Activated CD4-positive, alpha-beta memory T cell treated with anti-CD3 and anti-CD28 coated beads for 36 hours (primary cell): ENCODE measurements at regions of chr7 and their contacts with region 1.

Region 1: DNA sequence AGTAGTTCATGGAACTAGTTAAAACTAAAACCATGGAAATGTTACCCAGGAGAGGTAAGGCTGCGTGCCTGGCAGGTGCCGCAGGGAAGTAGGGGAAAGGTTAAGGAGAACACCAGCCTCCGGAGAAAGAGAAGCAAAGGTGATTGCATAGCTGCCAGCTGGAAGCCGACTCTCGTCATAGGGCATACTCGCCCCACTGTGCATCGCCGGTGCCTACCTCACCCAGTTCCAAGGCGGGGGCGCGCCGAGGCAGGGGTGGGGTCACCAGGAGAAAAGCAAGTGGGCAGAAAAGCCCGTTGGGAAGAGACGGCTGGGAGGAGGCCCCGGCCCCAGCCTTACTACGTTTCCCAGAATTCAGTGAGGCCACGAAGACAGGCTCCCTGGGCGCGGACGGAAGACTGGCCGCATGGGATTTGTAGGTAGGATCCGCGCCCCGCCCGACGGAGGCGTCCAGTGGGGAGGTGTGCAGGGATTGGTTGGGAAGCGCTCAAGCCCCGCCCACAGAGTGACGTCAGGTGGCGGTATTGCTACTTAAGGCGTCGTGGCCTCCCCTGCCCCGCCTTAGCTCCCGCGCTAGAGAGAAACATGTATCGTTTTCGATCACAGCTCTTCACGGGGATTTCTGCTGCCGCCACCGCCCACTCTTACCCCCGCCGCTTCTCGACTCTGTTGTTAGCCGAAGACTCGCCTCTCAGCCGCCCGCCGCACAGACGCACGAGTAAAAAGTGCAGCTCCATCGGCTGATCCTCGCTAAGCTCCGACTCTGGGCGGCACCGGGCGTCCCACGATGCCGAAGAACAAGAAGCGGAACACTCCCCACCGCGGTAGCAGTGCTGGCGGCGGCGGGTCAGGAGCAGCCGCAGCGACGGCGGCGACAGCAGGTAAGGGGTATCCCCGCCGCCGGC is at the start of gene IFRD1:
- DNase-seq: peak; percentile 98
- H3K4me3 Mint-ChIP-seq: peak within 1 kb of the TSS; percentile 96
- H3K27ac Mint-ChIP-seq: peak within 1 kb of the TSS; percentile 96
- H3K4me1 Mint-ChIP-seq: peaks cover 35% of the 10 kb centered on the region
- H3K27me3 Mint-ChIP-seq: no peaks in the 10 kb centered on the region
- total RNA-seq, gene IFRD1: 43.4 to 49.7 TPM

Region 2: GRCh38 chr7:111098011-111098925 is 1351.9 kb before region 1 on chr7:
- CTCF ChIA-PET with region 1: no interaction called
- POLR2A ChIA-PET with region 1: no interaction called
- intact Hi-C with region 1: loop called (anchors 10 kb)
- DNase-seq: peak; percentile 69
- H3K4me3 Mint-ChIP-seq: peak overlapping the region; percentile 15
- H3K27ac Mint-ChIP-seq: peak overlapping the region; percentile 51
- H3K4me1 Mint-ChIP-seq: peaks cover 36% of the 10 kb centered on the region
- H3K27me3 Mint-ChIP-seq: no peaks in the 10 kb centered on the region

Region 3: DNA sequence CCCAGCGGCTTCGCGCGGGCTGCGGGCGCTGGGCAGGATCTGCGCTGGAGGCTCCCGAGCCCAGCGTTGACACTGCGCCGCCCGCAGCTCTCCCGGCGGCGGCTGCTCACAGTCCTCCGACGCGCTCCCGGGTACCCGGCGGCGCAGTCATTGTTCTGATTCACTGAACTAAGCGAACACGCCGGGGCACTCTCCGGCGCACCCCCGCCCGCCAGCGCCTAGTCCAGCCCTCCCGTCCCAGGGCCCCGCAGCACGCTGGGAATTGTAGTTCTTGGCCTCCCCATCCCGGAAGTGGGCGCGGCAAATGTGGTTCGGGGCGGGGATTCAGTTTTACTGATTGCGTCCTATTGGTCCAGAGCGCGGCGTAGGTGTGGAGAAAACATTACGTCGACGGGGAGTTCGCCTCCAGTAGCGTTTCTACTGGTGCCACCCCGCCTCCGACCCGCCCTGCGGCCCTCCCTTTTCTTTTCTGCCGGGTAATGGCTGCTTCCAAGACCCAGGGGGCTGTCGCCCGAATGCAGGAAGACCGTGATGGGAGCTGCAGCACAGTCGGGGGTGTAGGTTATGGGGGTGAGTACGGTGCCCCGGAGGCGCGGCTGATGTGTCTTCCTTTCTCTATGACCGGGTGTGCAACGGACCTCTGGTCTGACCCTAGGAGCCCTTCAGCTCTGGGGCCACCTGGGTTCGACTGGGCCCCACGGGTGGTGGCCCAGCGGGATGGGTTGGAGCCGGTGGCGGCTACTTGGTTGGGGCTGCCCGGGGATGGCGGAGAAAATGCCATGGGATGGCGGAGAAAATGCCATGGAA is 243.7 kb before region 1 on chr7 and contains the starts of genes DOCK4 and ZNF277:
- CTCF ChIA-PET with region 1: interaction called, 8 read pairs
- POLR2A ChIA-PET with region 1: interaction called, 23 read pairs
- intact Hi-C with region 1: loop called (anchors 1 kb)
- DNase-seq: peak; percentile 99
- H3K4me3 Mint-ChIP-seq: peak within 1 kb of the TSS; percentile 86
- H3K27ac Mint-ChIP-seq: peak within 1 kb of the TSS; percentile 73
- H3K4me1 Mint-ChIP-seq: peaks cover 27% of the 10 kb centered on the region
- H3K27me3 Mint-ChIP-seq: peaks cover 30% of the 10 kb centered on the region
- total RNA-seq, gene DOCK4: 0.36 to 1.1 TPM
- total RNA-seq, gene ZNF277: 24.9 to 26.6 TPM

Region 4: GRCh38 chr7:112510001-112510742 is 60.0 kb after region 1 on chr7:
- CTCF ChIA-PET with region 1: no interaction called
- POLR2A ChIA-PET with region 1: no interaction called
- intact Hi-C with region 1: loop called (anchors 1 kb)
- DNase-seq: peak; percentile 31
- H3K4me3 Mint-ChIP-seq: no peak overlapping the region
- H3K27ac Mint-ChIP-seq: no peak overlapping the region
- H3K4me1 Mint-ChIP-seq: peaks cover 13% of the 10 kb centered on the region
- H3K27me3 Mint-ChIP-seq: no peaks in the 10 kb centered on the region

Region 5: GRCh38 chr7:112789817-112790585 is 339.8 kb after region 1 on chr7 and contains the start of gene TMEM168:
- CTCF ChIA-PET with region 1: no interaction called
- POLR2A ChIA-PET with region 1: no interaction called
- intact Hi-C with region 1: loop called (anchors 2 kb)
- DNase-seq: peak; percentile 90
- H3K4me3 Mint-ChIP-seq: peak within 1 kb of the TSS; percentile 98
- H3K27ac Mint-ChIP-seq: peak within 1 kb of the TSS; percentile 85
- H3K4me1 Mint-ChIP-seq: peaks cover 44% of the 10 kb centered on the region
- H3K27me3 Mint-ChIP-seq: no peaks in the 10 kb centered on the region
- total RNA-seq, gene TMEM168: 16.1 to 17.4 TPM

Region 6: DNA sequence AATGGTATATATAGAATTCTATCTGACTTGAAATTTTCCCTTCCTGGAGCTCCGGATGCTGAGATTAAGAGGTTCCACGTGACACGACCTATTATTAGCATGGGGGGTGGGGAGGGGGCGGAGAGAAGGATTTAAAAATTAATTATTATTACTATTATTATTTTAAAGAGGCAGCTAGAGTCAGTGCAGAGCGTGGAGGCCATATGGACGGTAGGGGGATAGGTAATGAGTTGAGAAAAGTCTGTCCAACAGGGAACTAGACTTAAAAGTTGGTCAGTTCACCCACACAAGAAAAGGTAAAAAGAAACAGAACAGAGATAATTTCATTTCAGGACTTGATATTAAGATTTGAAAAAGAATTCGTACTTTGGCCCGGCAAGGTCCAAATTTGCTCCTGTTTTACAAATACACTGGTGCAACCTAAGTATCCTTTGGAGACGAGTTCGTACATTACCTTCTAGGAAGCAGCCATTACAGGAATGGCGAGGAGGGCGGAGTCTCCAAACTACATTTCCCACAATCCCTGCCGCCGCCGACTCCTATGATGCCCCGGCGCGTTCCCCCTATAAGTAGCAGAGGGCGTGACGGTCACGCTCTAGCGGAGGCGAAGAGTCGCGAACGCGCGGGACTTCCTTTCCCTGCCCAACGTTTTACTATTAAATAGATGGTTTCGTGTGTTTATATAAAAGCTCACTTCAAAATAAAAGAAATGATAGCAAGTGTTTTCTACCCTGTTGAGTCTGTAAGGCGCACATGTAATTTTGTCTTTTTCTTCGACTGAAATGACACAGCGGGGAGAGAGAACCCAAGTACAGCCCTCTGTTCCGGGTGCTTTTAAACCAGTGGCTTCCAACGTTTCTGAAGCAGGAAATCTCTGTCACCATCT is 668.2 kb after region 1 on chr7 and contains the start of gene SMIM30:
- CTCF ChIA-PET with region 1: no interaction called
- POLR2A ChIA-PET with region 1: no interaction called
- intact Hi-C with region 1: loop called (anchors 1 kb)
- DNase-seq: peak; percentile 92
- H3K4me3 Mint-ChIP-seq: peak within 1 kb of the TSS; percentile 85
- H3K27ac Mint-ChIP-seq: peak within 1 kb of the TSS; percentile 87
- H3K4me1 Mint-ChIP-seq: peaks cover 38% of the 10 kb centered on the region
- H3K27me3 Mint-ChIP-seq: no peaks in the 10 kb centered on the region
- total RNA-seq, gene SMIM30: 37.5 to 41.5 TPM

Region 7: DNA sequence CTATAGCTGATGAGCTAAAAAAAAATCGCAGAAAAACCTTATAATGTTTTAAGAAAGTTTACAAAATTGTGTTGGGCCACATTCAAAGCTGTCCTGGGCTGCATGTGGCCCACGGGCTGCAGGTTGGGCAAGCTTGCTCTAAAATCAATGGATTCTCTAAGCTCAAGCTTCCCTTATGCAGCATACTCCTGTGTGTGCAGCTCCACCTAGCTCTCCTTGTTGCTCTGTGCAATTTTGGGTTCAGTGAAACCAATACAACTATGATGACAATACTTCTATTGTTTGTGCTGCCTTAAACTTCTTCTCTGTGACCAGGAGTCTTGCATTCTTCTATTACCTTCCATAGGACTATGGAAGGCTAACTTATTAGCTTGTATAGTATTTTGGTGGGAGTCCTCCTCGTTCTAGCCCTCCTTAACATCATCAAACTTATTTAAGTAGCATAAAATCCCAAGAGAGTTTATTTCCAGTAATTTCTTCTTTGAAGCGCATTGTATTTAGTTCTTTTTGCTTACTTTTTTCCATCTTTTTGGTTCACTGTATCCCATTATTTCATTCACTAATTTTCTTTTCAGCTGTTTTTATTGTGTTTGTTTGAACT is 839.1 kb after region 1 on chr7:
- CTCF ChIA-PET with region 1: no interaction called
- POLR2A ChIA-PET with region 1: no interaction called
- intact Hi-C with region 1: no loop called
- DNase-seq: no peak
- H3K4me3 Mint-ChIP-seq: no peak overlapping the region
- H3K27ac Mint-ChIP-seq: no peak overlapping the region
- H3K4me1 Mint-ChIP-seq: no peaks in the 10 kb centered on the region
- H3K27me3 Mint-ChIP-seq: peaks cover 2% of the 10 kb centered on the region